ENCODE measurements at regions of chr9 and their contacts with region 1.

Region 1: GRCh38 chr9:76302947-76303940 is 91.0 kb downstream of the RFK start:
- DNase-seq: peak in 8 of 35 experiments; percentile 2 to 60 (median 8)
- ATAC-seq: peak in 2 of 4 experiments; percentile 32 to 38
- H3K4me3 ChIP-seq: no peak overlapping the region
- H3K4me3 Mint-ChIP-seq: no peak overlapping the region
- H3K27ac ChIP-seq: no peak overlapping the region
- H3K27ac Mint-ChIP-seq: no peak overlapping the region
- H3K4me1 ChIP-seq: no peaks in the 10 kb centered on the region
- H3K4me1 Mint-ChIP-seq: no peaks in the 10 kb centered on the region
- H3K27me3 ChIP-seq: peaks cover 0 to 8% of the 10 kb centered on the region in 2 experiments
- H3K27me3 Mint-ChIP-seq: peaks cover 8 to 15% of the 10 kb centered on the region in 2 donors

Region 2: DNA sequence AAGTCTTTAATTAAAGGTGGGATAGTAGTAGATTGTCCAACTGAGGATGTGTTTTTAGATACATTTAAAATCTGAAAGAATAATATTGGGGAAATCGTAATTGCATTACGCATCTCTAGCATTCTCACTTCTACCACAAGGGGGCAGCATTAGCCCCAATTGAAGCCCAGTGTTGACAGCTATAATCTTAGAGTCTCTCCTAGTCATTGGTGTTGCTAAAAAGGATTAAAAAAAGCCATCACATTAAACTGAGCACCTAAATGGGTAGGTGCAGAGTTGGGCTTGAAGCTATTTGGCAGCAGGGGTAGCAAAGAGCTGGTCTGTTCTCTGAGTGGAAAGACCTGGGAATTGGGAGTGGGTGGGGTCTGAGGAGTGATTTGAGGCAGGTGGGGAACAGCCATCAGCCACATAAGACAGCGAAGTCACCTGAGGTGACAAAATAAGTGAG is 1037.7 kb before region 1 on chr9:
- CTCF ChIA-PET with region 1: interaction called, 7 to 33 read pairs
- POLR2A ChIA-PET with region 1: no interaction called
- DNase-seq: peak in 26 of 35 experiments; percentile 2 to 68 (median 34)
- ATAC-seq: peak; percentile 43 to 60 (median 58)
- H3K4me3 ChIP-seq: no peak overlapping the region
- H3K4me3 Mint-ChIP-seq: no peak overlapping the region
- H3K27ac ChIP-seq: no peak overlapping the region
- H3K27ac Mint-ChIP-seq: no peak overlapping the region
- H3K4me1 ChIP-seq: no peaks in the 10 kb centered on the region
- H3K4me1 Mint-ChIP-seq: peaks cover 2 to 6% (median 2%) of the 10 kb centered on the region in 3 donors
- H3K27me3 ChIP-seq: no peaks in the 10 kb centered on the region
- H3K27me3 Mint-ChIP-seq: no peaks in the 10 kb centered on the region

Region 3: GRCh38 chr9:75601279-75601678 is 702.0 kb before region 1 on chr9:
- CTCF ChIA-PET with region 1: interaction called in 1 of 2 experiments, 10 read pairs
- POLR2A ChIA-PET with region 1: no interaction called
- DNase-seq: no peak
- ATAC-seq: no peak
- H3K4me3 ChIP-seq: no peak overlapping the region
- H3K4me3 Mint-ChIP-seq: no peak overlapping the region
- H3K27ac ChIP-seq: no peak overlapping the region
- H3K27ac Mint-ChIP-seq: no peak overlapping the region
- H3K4me1 ChIP-seq: no peaks in the 10 kb centered on the region
- H3K4me1 Mint-ChIP-seq: no peaks in the 10 kb centered on the region
- H3K27me3 ChIP-seq: no peaks in the 10 kb centered on the region
- H3K27me3 Mint-ChIP-seq: peaks cover 0 to 7% of the 10 kb centered on the region in 2 donors

Region 4: GRCh38 chr9:76313771-76314170 is 10.5 kb after region 1 on chr9:
- CTCF ChIA-PET with region 1: interaction called in 1 of 2 experiments, 14 read pairs
- POLR2A ChIA-PET with region 1: no interaction called
- DNase-seq: no peak
- ATAC-seq: no peak
- H3K4me3 ChIP-seq: no peak overlapping the region
- H3K4me3 Mint-ChIP-seq: no peak overlapping the region
- H3K27ac ChIP-seq: no peak overlapping the region
- H3K27ac Mint-ChIP-seq: no peak overlapping the region
- H3K4me1 ChIP-seq: no peaks in the 10 kb centered on the region
- H3K4me1 Mint-ChIP-seq: no peaks in the 10 kb centered on the region
- H3K27me3 ChIP-seq: no peaks in the 10 kb centered on the region
- H3K27me3 Mint-ChIP-seq: peaks cover 0 to 4% of the 10 kb centered on the region in 2 donors

Region 5: DNA sequence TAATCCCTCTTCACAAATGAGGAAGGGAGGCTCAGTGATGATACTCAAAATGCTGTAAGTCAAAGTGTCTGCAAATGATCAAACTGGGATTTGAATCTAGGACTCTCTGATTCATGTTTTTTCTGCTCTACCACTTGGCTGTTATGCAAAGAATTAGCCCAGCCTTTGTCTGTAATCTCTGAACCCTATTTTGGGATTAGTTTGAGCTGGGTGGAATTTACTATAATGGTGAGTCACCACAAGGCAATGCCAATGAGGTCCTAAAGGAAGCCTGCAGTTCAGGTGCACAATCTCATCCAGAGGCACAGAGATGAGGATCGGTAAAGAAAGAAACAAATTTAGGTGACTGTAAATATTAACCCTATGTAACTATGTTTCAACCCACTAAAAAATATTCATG is 61.8 kb after region 1 on chr9:
- CTCF ChIA-PET with region 1: no interaction called
- POLR2A ChIA-PET with region 1: no interaction called
- DNase-seq: no peak
- ATAC-seq: no peak
- H3K4me3 ChIP-seq: no peak overlapping the region
- H3K4me3 Mint-ChIP-seq: no peak overlapping the region
- H3K27ac ChIP-seq: no peak overlapping the region
- H3K27ac Mint-ChIP-seq: no peak overlapping the region
- H3K4me1 ChIP-seq: no peaks in the 10 kb centered on the region
- H3K4me1 Mint-ChIP-seq: no peaks in the 10 kb centered on the region
- H3K27me3 ChIP-seq: peaks cover 0 to 4% of the 10 kb centered on the region in 2 experiments
- H3K27me3 Mint-ChIP-seq: peaks cover 0 to 3% of the 10 kb centered on the region in 2 donors